CD4-positive, alpha-beta memory T cell (primary cell): ENCODE measurements at regions of chr2 and their contacts with region 1.

Region 1: GRCh38 chr2:68909793-68910674 is 38.8 kb upstream of the BMP10 start:
- DNase-seq: peak; percentile 43 to 69 (median 54)
- H3K4me3 ChIP-seq: no peak overlapping the region
- H3K4me3 Mint-ChIP-seq: peak overlapping the region in 5 of 8 donors; percentile 15 to 70 (median 55)
- H3K27ac ChIP-seq: no peak overlapping the region
- H3K27ac Mint-ChIP-seq: peak overlapping the region; percentile 70 to 92 (median 84)
- H3K4me1 ChIP-seq: peaks cover 76% of the 10 kb centered on the region
- H3K4me1 Mint-ChIP-seq: peaks cover 31 to 38% (median 36%) of the 10 kb centered on the region in 4 donors
- H3K27me3 ChIP-seq: no peaks in the 10 kb centered on the region
- H3K27me3 Mint-ChIP-seq: no peaks in the 10 kb centered on the region

Region 2: GRCh38 chr2:68062680-68063387 is 847.2 kb before region 1 on chr2 and contains the start of gene C1D:
- CTCF ChIA-PET with region 1: no interaction called
- POLR2A ChIA-PET with region 1: no interaction called
- intact Hi-C with region 1: no loop called
- DNase-seq: peak; percentile 89 to 92 (median 90)
- H3K4me3 ChIP-seq: peak within 1 kb of the TSS; percentile 93 to 100
- H3K4me3 Mint-ChIP-seq: peak within 1 kb of the TSS; percentile 95 to 98 (median 96)
- H3K27ac ChIP-seq: peak within 1 kb of the TSS; percentile 98
- H3K27ac Mint-ChIP-seq: peak within 1 kb of the TSS; percentile 89 to 99 (median 98)
- H3K4me1 ChIP-seq: peaks cover 44% of the 10 kb centered on the region
- H3K4me1 Mint-ChIP-seq: peaks cover 32 to 52% (median 38%) of the 10 kb centered on the region in 4 donors
- H3K27me3 ChIP-seq: no peaks in the 10 kb centered on the region
- H3K27me3 Mint-ChIP-seq: peaks cover 6 to 9% of the 10 kb centered on the region in 2 donors
- total RNA-seq, gene C1D: 12.4 to 13.4 TPM

Region 3: GRCh38 chr2:68487773-68488355 is 422.2 kb before region 1 on chr2:
- CTCF ChIA-PET with region 1: interaction called, 5 read pairs
- POLR2A ChIA-PET with region 1: no interaction called
- intact Hi-C with region 1: loop called (anchors 5 kb)
- DNase-seq: peak in 4 of 5 donors; percentile 24 to 39 (median 31)
- H3K4me3 ChIP-seq: no peak overlapping the region
- H3K4me3 Mint-ChIP-seq: peak overlapping the region in 1 of 8 donors; percentile 28
- H3K27ac ChIP-seq: no peak overlapping the region
- H3K27ac Mint-ChIP-seq: peak overlapping the region in 2 of 7 donors; percentile 35 to 38
- H3K4me1 ChIP-seq: no peaks in the 10 kb centered on the region
- H3K4me1 Mint-ChIP-seq: peaks cover 0 to 5% (median 1%) of the 10 kb centered on the region in 4 donors
- H3K27me3 ChIP-seq: no peaks in the 10 kb centered on the region
- H3K27me3 Mint-ChIP-seq: no peaks in the 10 kb centered on the region

Region 4: DNA sequence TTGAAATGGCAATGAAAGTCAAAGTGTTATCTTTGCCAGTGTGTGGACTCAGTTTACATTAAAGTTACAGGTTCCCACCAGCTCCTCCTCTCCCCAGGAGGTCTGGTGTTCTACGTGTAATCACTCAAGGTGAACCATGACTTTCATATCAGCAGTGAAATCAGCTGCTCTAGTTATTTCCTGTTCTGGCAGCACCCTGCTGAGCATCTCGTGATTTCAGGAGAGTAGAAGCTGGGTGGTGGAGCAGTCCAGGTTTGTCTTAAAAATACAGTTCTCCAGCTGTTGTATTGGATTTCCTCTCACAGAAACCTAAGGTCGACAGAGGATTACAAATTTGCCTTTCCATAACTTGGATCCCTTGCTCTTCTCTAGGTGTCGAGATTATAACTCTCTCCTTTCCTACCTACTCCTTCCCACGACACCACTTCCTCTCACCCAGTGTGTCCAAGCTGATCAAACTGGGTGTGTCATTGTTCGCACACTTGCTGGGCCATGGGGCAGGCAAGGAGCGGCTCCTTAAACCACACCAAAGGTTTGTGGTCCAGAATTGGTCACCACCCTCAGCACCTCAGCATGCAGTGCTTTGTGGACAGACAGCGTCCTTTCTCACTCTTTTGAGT is 188.4 kb before region 1 on chr2:
- CTCF ChIA-PET with region 1: interaction called, 10 read pairs
- POLR2A ChIA-PET with region 1: interaction called, 24 read pairs
- intact Hi-C with region 1: no loop called
- DNase-seq: peak; percentile 64 to 78 (median 70)
- H3K4me3 ChIP-seq: peak overlapping the region in 1 of 2 donors; percentile 6
- H3K4me3 Mint-ChIP-seq: peak overlapping the region; percentile 63 to 89 (median 83)
- H3K27ac ChIP-seq: peak overlapping the region; percentile 54
- H3K27ac Mint-ChIP-seq: peak overlapping the region; percentile 91 to 98 (median 96)
- H3K4me1 ChIP-seq: peaks cover 96% of the 10 kb centered on the region
- H3K4me1 Mint-ChIP-seq: peaks cover 75 to 99% (median 90%) of the 10 kb centered on the region in 4 donors
- H3K27me3 ChIP-seq: no peaks in the 10 kb centered on the region
- H3K27me3 Mint-ChIP-seq: no peaks in the 10 kb centered on the region

Region 5: DNA sequence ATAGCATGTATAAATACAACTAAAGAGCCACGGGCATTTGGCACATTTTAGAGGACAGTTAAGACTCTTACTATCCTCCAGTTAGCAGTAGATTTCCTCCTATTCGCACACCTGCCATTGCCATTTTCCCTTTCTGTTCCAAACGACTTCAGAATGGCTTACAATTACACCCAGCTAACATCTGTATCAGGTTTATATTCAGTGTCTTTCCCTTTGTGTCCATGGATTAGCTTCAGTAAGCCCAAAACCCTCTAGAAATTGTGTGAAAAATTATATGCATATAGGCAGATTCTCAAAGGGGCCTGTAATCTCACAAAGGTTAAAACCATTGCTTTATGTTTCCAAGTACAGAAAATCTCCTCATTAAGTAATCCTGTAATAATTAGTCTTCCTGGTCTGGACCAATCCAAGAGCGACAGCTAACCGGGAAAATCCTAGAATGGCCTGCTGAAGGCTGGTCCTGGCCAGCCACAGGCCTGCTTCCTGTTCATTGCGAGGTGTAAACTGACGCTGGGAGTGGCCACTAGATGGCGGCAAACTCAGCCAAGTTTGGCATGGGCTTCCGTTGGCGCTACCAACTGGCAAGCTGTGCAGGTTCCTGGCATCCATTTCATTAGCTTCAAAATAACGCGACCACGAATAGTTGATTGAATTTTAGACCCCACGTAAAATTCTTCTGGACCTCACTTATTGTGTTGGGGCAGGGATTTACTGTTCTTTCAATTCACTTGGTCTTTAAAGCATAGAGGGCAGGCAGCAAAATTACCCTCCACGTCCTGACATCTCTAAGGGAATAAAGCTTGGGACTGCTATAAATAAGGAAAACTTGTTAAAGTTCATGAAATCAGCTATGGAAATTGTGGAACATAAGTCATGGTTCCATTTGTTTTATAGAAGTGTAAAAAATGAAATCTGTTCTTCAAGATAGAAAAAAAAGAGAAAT is 158.4 kb before region 1 on chr2:
- CTCF ChIA-PET with region 1: interaction called, 81 read pairs
- POLR2A ChIA-PET with region 1: interaction called, 25 read pairs
- intact Hi-C with region 1: loop called (anchors 1 kb)
- DNase-seq: peak; percentile 84 to 90 (median 85)
- H3K4me3 ChIP-seq: peak overlapping the region in 1 of 2 donors; percentile 5
- H3K4me3 Mint-ChIP-seq: peak overlapping the region in 7 of 8 donors; percentile 29 to 86 (median 62)
- H3K27ac ChIP-seq: peak overlapping the region; percentile 56
- H3K27ac Mint-ChIP-seq: peak overlapping the region; percentile 83 to 96 (median 94)
- H3K4me1 ChIP-seq: peaks cover 97% of the 10 kb centered on the region
- H3K4me1 Mint-ChIP-seq: peaks cover 73 to 96% (median 86%) of the 10 kb centered on the region in 4 donors
- H3K27me3 ChIP-seq: no peaks in the 10 kb centered on the region
- H3K27me3 Mint-ChIP-seq: no peaks in the 10 kb centered on the region

Region 6: DNA sequence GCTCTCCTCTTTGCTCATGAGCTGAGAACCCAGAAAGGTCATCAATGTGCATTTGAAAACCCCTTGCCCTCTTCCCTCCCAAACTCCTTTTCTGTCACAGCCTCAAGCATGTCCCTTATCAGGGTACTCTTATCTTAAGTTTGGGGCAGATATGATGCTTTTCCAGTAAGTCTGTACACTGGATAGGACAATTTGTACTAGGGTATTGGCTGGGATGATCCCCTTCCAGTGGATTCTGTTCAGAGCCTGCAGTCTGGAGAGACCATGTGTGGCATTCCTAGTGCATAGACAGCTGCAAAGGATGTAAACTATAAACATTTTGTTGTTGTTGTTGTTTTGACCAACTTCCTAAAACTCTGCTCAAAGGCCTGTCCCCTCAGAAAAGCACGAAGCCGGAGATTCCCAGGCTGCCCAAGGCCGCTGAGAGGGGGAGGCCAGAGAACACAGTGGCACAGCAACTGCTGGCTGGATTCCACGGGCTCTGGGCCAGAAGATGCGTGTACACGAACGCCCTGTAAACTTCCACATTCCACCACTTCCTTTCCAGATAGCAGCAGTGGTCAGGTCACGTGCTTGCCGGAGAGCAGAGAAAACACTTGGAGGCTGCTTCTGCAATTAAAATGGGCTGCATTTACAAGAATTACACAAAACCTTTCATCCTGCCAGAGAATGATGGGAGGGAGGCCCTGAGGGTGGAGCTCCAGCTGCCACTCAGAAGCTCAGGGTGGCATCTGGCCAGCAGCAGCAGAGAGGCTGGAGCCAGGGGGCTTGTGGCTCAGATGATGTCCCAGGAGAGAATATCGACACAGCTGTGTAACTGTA is 80.9 kb before region 1 on chr2:
- CTCF ChIA-PET with region 1: interaction called, 7 read pairs
- POLR2A ChIA-PET with region 1: interaction called, 21 read pairs
- intact Hi-C with region 1: loop called (anchors 2 kb)
- DNase-seq: peak; percentile 80 to 90 (median 83)
- H3K4me3 ChIP-seq: peak overlapping the region in 1 of 2 donors; percentile 32
- H3K4me3 Mint-ChIP-seq: peak overlapping the region; percentile 17 to 91 (median 80)
- H3K27ac ChIP-seq: peak overlapping the region; percentile 65
- H3K27ac Mint-ChIP-seq: peak overlapping the region; percentile 90 to 94 (median 92)
- H3K4me1 ChIP-seq: peaks cover 59% of the 10 kb centered on the region
- H3K4me1 Mint-ChIP-seq: peaks cover 50 to 73% (median 62%) of the 10 kb centered on the region in 4 donors
- H3K27me3 ChIP-seq: no peaks in the 10 kb centered on the region
- H3K27me3 Mint-ChIP-seq: no peaks in the 10 kb centered on the region